Activated CD4-positive, alpha-beta T cell treated with anti-CD3 and anti-CD28 coated beads for 36 hours (primary cell): ENCODE measurements at regions of chr15 and their contacts with region 1.

Region 1: GRCh38 chr15:41230650-41231533 is at the starts of genes CHP1 and EXD1:
- DNase-seq: peak; percentile 99
- ATAC-seq: peak; percentile 99
- H3K4me3 Mint-ChIP-seq: peak within 1 kb of the TSS; percentile 87
- H3K27ac Mint-ChIP-seq: peak within 1 kb of the TSS; percentile 86
- H3K4me1 Mint-ChIP-seq: peaks cover 29% of the 10 kb centered on the region
- H3K27me3 Mint-ChIP-seq: no peaks in the 10 kb centered on the region
- total RNA-seq, gene CHP1: 32.7 to 34.5 TPM
- total RNA-seq, gene EXD1: not detected

Region 2: GRCh38 chr15:40694688-40695468 is 536.0 kb before region 1 on chr15 and contains the start of gene RAD51:
- CTCF ChIA-PET with region 1: no interaction called
- POLR2A ChIA-PET with region 1: no interaction called
- intact Hi-C with region 1: loop called in 1 of 2 experiments (anchors 2 kb)
- DNase-seq: peak; percentile 96
- ATAC-seq: peak; percentile 93
- H3K4me3 Mint-ChIP-seq: peak within 1 kb of the TSS; percentile 95
- H3K27ac Mint-ChIP-seq: peak within 1 kb of the TSS; percentile 98
- H3K4me1 Mint-ChIP-seq: peaks cover 20% of the 10 kb centered on the region
- H3K27me3 Mint-ChIP-seq: no peaks in the 10 kb centered on the region
- total RNA-seq, gene RAD51: 73.5 to 75.3 TPM

Region 3: DNA sequence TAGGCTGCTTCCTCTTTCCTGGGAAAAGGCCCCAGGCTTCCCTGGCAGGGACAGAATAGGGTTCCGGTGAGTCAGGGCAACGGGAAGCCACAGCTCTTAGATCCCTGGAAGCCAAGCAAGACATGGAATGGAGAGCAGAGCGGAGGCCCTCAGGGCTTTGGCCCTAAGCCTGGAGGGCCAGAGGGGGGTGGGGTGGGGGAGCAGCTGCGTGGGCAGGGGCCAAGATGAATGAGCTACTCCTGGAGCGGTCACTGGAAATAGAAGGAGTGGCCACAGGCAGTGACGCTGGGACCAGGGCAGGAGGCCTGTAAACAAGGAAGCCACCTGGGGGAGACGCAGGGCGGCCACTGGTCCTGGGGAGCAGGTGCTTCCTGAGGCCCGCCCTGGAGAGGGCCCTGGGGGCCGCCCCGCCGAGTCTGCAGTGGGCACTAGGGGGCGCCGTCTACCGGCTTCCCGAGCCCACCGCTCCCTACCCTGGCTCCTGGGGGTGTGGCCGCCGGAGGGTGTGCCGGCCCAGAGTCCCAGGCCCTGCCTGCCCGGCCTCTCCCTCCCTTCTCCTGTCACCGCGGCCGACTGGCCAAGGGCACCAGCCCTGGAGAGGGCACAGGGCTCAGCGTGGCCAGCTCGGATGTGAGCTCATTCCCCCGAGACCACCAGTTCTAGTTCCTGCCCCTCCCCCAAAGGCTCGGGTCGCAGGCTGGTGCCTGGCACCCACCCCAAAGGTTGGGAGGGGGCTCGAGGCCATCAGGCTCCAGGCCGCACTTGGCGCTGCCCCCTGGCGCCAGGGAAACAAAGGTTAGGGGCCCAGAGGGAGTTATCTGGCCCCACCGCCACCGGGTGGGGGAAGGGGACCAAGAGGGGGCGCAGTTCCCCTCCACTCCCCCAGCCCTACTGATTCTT is 324.6 kb before region 1 on chr15:
- CTCF ChIA-PET with region 1: interaction called, 3 read pairs
- POLR2A ChIA-PET with region 1: no interaction called
- intact Hi-C with region 1: loop called in 1 of 2 experiments (anchors 2 kb)
- DNase-seq: peak; percentile 91
- ATAC-seq: peak; percentile 81
- H3K4me3 Mint-ChIP-seq: peak overlapping the region; percentile 69
- H3K27ac Mint-ChIP-seq: peak overlapping the region; percentile 82
- H3K4me1 Mint-ChIP-seq: peaks cover 27% of the 10 kb centered on the region
- H3K27me3 Mint-ChIP-seq: no peaks in the 10 kb centered on the region

Region 4: DNA sequence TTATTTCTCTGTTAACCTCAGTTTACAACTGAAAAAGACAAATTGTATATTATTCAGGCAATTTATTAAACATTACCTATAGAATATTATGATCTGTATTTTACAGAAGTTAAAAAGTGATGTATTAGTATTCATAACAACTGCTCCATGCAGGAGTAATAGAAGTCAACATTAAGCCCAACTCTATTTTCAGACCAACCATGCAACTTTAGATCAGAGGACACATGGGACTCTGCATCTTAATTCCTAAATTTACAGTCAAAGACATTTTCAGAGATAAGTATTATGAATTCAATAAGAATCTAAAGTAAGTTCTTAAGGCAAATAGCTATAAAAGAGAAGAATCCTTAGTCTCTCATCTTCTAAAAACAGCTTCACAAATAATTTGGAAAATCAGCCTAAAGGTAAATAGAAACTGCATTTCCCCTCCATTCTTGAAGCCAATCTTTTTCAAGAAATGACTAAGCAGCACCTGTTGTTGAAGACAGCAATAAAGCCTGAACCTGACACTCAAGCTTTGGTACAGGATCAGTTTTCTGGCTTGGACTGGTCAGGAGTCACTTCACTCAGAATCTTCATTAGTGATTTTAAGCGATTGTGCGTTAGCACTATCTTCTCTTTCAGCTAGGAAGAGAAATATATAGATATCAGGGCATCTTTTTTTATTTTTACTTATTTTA is 78.5 kb after region 1 on chr15:
- CTCF ChIA-PET with region 1: no interaction called
- POLR2A ChIA-PET with region 1: no interaction called
- intact Hi-C with region 1: no loop called
- DNase-seq: no peak
- ATAC-seq: no peak
- H3K4me3 Mint-ChIP-seq: no peak overlapping the region
- H3K27ac Mint-ChIP-seq: no peak overlapping the region
- H3K4me1 Mint-ChIP-seq: no peaks in the 10 kb centered on the region
- H3K27me3 Mint-ChIP-seq: no peaks in the 10 kb centered on the region

Region 5: DNA sequence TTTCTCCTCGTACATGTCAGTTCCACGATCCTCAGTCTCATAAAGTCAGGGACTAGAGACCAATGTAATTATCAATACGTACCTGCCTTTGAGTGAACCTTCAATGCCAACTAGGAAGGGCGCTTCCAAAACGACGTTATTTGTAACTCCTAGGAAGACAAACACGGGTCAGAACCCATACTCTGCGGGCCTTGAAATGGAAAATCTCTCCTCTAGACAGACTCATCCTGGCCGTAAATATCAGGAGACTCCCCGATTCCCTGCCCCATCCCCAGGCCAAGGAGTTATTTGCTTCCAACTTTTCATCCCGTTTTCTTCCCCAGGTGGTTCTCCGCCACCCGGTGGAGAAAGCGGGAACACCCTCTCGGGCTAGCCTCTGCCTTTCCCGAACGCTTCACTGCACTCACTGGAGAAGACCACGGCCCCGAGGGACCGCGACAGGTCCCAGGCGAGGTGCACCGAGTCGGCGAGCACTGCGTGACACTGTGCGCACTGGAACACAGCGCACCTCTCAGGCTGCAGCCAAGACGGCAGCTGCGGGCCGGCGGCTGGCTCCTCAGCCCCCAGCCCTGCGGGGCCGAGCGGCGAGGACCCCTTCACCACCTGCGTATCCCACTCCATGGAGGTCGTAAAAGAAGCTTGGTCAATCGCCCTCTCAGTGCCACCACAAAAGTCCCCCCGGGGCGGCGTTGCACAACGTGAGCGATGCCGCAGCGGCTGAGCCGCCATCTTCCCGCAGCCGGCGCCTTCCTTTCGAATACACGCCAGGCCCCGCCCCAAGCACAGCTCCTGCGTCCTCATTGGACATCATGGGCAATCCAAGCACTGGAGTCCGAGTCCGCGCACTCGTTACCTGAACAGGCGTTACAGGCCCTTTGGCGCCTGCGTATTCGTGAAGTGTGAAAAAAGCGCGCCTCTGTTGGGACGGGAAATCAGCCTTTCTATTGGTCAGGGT is 101.2 kb after region 1 on chr15 and contains the start of gene OIP5:
- CTCF ChIA-PET with region 1: interaction called, 6 read pairs
- POLR2A ChIA-PET with region 1: interaction called, 11 read pairs
- intact Hi-C with region 1: loop called (anchors 1 kb)
- DNase-seq: peak; percentile 99
- ATAC-seq: peak; percentile 98
- H3K4me3 Mint-ChIP-seq: peak within 1 kb of the TSS; percentile 91
- H3K27ac Mint-ChIP-seq: peak within 1 kb of the TSS; percentile 92
- H3K4me1 Mint-ChIP-seq: peaks cover 26% of the 10 kb centered on the region
- H3K27me3 Mint-ChIP-seq: no peaks in the 10 kb centered on the region
- total RNA-seq, gene OIP5: 11.5 to 14.0 TPM

Region 6: DNA sequence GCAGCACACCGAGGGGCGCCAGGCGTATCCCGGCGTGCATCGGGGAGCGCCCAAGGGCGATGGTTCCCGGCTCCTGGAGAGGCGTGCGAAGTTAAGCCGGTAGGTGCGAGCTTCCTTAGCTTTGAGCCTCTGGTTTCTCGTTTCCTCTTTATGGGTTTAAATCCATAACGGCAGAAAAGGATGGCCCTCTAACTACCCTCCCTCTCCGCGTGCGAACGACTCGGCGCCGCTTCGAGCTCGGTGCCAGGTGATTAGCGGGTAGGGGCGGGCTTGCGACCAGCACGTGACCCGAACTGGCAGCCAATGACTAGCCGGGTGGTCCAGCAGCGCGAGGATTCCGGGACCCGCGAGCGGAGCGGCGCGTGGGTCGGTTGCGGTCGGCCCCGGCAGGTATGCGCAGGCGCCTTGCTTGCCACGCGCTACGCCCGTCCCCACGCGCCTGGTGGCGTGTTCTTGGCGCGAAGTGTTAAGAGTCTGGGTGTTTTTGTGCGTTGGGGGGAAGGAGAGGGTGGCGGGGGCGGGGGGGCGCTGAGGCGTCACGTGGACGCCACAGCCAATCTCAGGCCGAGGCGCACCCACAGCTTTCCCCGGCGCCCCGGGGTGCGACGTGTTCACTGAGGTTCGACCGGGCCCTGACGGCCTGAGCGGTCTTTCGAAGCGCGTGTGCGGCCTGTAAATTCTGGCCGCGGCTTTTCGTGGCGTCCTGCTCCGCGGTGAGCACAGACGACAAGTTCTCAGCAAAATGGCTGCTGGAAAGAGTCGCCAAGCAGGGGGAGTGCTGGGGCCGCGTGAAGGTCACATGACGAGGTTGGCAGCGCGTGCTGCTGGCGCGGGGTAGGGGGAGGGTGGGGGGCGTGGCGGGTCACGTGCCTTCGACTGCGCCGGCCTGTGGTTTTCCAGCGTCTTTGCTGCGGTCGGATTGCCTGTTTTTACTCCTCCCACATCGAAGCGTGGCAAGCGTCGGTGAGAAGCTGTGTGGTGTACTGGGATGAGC is 390.6 kb after region 1 on chr15:
- CTCF ChIA-PET with region 1: no interaction called
- POLR2A ChIA-PET with region 1: no interaction called
- intact Hi-C with region 1: loop called in 1 of 2 experiments (anchors 1 kb)
- DNase-seq: peak; percentile 91
- ATAC-seq: peak; percentile 90
- H3K4me3 Mint-ChIP-seq: peak overlapping the region; percentile 70
- H3K27ac Mint-ChIP-seq: peak overlapping the region; percentile 76
- H3K4me1 Mint-ChIP-seq: peaks cover 11% of the 10 kb centered on the region
- H3K27me3 Mint-ChIP-seq: no peaks in the 10 kb centered on the region

Region 7: GRCh38 chr15:41972253-41973242 is 741.7 kb after region 1 on chr15 and contains the start of gene EHD4:
- CTCF ChIA-PET with region 1: no interaction called
- POLR2A ChIA-PET with region 1: no interaction called
- intact Hi-C with region 1: loop called in 1 of 2 experiments (anchors 5 kb)
- DNase-seq: peak; percentile 98
- ATAC-seq: peak; percentile 80
- H3K4me3 Mint-ChIP-seq: peak within 1 kb of the TSS; percentile 86
- H3K27ac Mint-ChIP-seq: peak within 1 kb of the TSS; percentile 94
- H3K4me1 Mint-ChIP-seq: peaks cover 53% of the 10 kb centered on the region
- H3K27me3 Mint-ChIP-seq: peaks cover 8% of the 10 kb centered on the region
- total RNA-seq, gene EHD4: 34.7 to 35.7 TPM